GM12878 (cell line): ENCODE measurements at regions of chr12 and their contacts with region 1.

Region 1: GRCh38 chr12:63795944-63796343 is 16.2 kb downstream of the RXYLT1 start:
- DNase-seq: no peak
- ATAC-seq: no peak
- H3K4me3 ChIP-seq: no peak overlapping the region
- H3K27ac ChIP-seq: no peak overlapping the region
- H3K4me1 ChIP-seq: no peaks in the 10 kb centered on the region
- H3K27me3 ChIP-seq: no peaks in the 10 kb centered on the region
- CTCF ChIP-seq: no peak
- EP300 ChIP-seq: no peak
- POLR2A ChIP-seq: no peak
- RAD21 ChIP-seq: no peak

Region 2: DNA sequence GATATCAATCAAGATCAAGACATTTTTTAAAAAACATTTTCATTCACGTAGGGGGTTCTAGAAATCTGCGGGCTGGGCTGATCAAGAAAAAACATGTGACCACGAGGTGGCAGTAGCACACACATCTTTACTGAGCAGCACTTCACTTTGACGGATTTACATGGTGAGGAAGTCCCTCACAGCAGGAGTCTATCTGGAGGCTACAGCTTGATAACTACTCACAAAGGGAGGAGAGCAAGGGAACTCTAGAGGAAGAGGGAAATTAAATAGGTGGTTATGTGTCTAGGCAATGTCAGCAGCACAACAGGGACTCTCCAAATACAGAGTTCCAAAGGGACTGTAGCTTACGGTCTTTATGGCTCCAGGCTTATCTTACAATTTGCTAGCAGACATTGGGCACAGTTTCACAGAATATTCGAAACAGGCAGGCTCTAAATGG is 375.7 kb before region 1 on chr12:
- CTCF ChIA-PET with region 1: interaction called, 31 read pairs
- POLR2A ChIA-PET with region 1: no interaction called
- RAD21 ChIA-PET with region 1: no interaction called
- SMC1A ChIA-PET with region 1: interaction called, 6 read pairs
- in situ Hi-C with region 1: loop called (anchors 5 kb)
- intact Hi-C with region 1: no loop called
- DNase-seq: peak; percentile 24
- ATAC-seq: peak; percentile 99
- H3K4me3 ChIP-seq: no peak overlapping the region
- H3K27ac ChIP-seq: no peak overlapping the region
- H3K4me1 ChIP-seq: no peaks in the 10 kb centered on the region
- H3K27me3 ChIP-seq: no peaks in the 10 kb centered on the region
- CTCF ChIP-seq: peak; percentile 57 to 75 (median 59); a peak in 5 of 6 replicates
- EP300 ChIP-seq: no peak
- POLR2A ChIP-seq: no peak
- RAD21 ChIP-seq: peak; percentile 66